ENCODE measurements at regions of chr1 and their contacts with region 1.

Region 1: GRCh38 chr1:209585672-209586071 is 2.2 kb downstream of the CAMK1G start:
- DNase-seq: no peak
- H3K4me3 ChIP-seq: no peak overlapping the region
- H3K27ac ChIP-seq: no peak overlapping the region
- H3K4me1 ChIP-seq: peaks cover 9% of the 10 kb centered on the region
- H3K27me3 ChIP-seq: peaks cover 42 to 43% of the 10 kb centered on the region in 2 experiments
- CTCF ChIP-seq: no peak
- POLR2A ChIP-seq: no peak

Region 2: GRCh38 chr1:209527372-209527771 is 58.3 kb before region 1 on chr1:
- CTCF ChIA-PET with region 1: no interaction called
- POLR2A ChIA-PET with region 1: no interaction called
- dilution Hi-C with region 1: no loop called
- intact Hi-C with region 1: no loop called
- DNase-seq: no peak
- H3K4me3 ChIP-seq: no peak overlapping the region
- H3K27ac ChIP-seq: no peak overlapping the region
- H3K4me1 ChIP-seq: no peaks in the 10 kb centered on the region
- H3K27me3 ChIP-seq: peaks cover 0 to 2% of the 10 kb centered on the region in 2 experiments
- CTCF ChIP-seq: no peak
- POLR2A ChIP-seq: no peak

Region 3: DNA sequence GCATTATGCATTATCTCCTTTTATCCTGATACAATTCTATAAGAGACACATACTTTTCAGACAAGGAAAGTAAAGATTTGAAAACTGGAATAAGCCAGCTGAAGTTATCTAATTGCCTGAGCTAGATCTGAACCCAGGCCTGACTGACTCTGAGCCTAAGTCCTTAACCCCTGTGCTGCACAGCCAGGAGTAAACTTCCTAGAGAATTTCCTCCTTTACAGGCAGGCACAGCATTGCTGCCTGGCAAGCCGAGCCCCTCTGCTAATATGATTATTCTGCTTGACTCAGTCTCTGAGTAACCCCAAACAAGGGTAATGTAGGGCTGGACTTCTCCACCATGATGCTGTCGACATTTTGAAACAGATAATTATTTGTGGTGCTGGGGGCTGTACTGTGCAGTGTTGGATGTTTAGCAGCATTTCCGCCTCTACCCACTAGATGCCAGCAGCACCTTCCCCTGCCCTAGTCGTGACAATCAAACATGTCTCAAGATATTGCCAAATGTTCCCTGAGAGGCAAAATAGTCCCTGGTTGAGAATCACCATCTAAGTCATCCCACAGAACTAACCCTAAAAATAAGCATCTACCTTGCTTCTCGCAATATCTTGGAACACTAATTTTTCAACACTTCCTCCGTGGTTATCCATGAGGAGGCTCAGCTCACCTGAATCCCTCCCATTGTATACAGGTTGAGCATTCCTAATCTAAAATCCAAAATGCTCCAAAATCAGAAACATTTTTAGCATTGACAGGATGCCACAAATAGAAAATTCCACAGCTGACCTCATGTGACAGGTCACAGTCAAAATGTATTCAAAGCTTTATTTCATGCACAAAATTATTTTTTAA is 16.4 kb after region 1 on chr1:
- CTCF ChIA-PET with region 1: interaction called, 13 read pairs
- POLR2A ChIA-PET with region 1: no interaction called
- dilution Hi-C with region 1: no loop called
- intact Hi-C with region 1: no loop called
- DNase-seq: peak; percentile 45
- H3K4me3 ChIP-seq: no peak overlapping the region
- H3K27ac ChIP-seq: no peak overlapping the region
- H3K4me1 ChIP-seq: peaks cover 5% of the 10 kb centered on the region
- H3K27me3 ChIP-seq: peaks cover 3 to 18% of the 10 kb centered on the region in 2 experiments
- CTCF ChIP-seq: peak; percentile 62 to 66
- POLR2A ChIP-seq: no peak

Region 4: DNA sequence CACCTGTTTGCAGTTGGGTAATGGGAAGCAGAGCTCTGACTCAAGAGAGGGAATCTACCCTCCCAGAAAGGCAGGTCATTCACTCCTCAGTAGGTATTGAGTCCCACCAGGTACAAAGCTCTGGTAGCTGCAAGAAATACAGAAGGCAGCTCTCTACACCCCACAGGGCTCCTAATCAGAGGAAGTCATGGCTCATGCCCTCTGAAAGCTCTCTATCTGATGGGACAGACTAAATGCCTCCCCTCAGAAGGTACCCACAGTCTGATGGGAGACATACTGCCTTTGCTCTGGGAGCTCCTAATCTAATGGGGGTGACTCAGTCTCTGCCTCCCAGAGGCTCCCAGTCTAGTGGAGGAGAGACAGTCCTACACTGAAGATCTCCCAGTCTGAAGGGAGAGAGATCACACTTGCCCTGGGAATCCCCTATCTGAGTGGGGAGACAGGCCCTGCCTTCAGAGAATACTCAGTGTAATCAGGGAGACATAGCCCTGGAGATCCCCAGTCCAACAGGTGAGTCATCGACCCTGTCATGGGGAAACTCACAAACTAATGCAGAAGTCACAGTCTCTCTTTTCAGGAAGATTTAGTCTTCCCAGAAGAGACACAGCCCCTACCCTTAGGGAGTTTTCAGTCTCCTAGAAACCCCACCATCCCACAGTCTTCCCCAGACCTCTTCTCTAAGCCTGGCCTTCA is 21.6 kb after region 1 on chr1:
- CTCF ChIA-PET with region 1: interaction called, 10 read pairs
- POLR2A ChIA-PET with region 1: no interaction called
- dilution Hi-C with region 1: no loop called
- intact Hi-C with region 1: no loop called
- DNase-seq: no peak
- H3K4me3 ChIP-seq: no peak overlapping the region
- H3K27ac ChIP-seq: no peak overlapping the region
- H3K4me1 ChIP-seq: no peaks in the 10 kb centered on the region
- H3K27me3 ChIP-seq: peaks cover 2 to 6% of the 10 kb centered on the region in 2 experiments
- CTCF ChIP-seq: no peak
- POLR2A ChIP-seq: no peak

Region 5: DNA sequence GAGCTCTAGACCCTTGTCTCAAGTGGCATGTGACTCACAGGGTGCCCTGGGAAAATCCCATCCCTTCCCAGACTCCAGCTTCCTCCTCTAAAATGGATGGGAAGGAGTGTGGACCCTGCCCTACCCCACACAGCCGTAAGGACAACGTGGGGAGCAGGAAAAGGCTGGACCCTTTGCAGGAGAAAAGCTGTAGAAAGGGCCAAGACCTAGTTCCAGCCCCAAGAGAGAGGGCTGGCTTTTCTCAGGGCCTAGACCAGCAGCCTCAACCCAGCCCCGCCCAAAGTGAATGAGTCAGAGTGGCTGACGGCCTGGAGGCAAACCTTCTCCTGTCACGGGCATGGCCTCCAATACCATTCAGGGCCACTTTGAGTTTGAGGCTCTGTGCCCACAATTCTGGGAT is 65.5 kb after region 1 on chr1:
- CTCF ChIA-PET with region 1: interaction called, 10 read pairs
- POLR2A ChIA-PET with region 1: no interaction called
- dilution Hi-C with region 1: no loop called
- intact Hi-C with region 1: no loop called
- DNase-seq: peak; percentile 77
- H3K4me3 ChIP-seq: no peak overlapping the region
- H3K27ac ChIP-seq: peak overlapping the region; percentile 60
- H3K4me1 ChIP-seq: peaks cover 27% of the 10 kb centered on the region
- H3K27me3 ChIP-seq: no peaks in the 10 kb centered on the region
- CTCF ChIP-seq: no peak
- POLR2A ChIP-seq: no peak